ENCODE measurements at regions of chr3 and their contacts with region 1.

Region 1: GRCh38 chr3:54850484-54851018 is 77.3 kb downstream of the LRTM1 start:
- DNase-seq: no peak
- H3K4me3 ChIP-seq: no peak overlapping the region
- H3K27me3 ChIP-seq: no peaks in the 10 kb centered on the region; the same call in 1 of the 2 replicates
- CTCF ChIP-seq: no peak

Region 2: GRCh38 chr3:54793171-54793570 is 57.4 kb before region 1 on chr3:
- CTCF ChIA-PET with region 1: no interaction called
- POLR2A ChIA-PET with region 1: no interaction called
- DNase-seq: no peak
- H3K4me3 ChIP-seq: no peak overlapping the region
- H3K27me3 ChIP-seq: no peaks in the 10 kb centered on the region
- CTCF ChIP-seq: no peak

Region 3: GRCh38 chr3:54830658-54831057 is 19.9 kb before region 1 on chr3:
- CTCF ChIA-PET with region 1: interaction called, 10 read pairs
- POLR2A ChIA-PET with region 1: no interaction called
- DNase-seq: no peak
- H3K4me3 ChIP-seq: no peak overlapping the region
- H3K27me3 ChIP-seq: no peaks in the 10 kb centered on the region
- CTCF ChIP-seq: peak; percentile 64